Heart right ventricle (tissue), 16 donors: ENCODE measurements at regions of chr2 and their contacts with region 1.

Region 1: GRCh38 chr2:222903234-222904220 is 42.7 kb downstream of the ACSL3 start:
- DNase-seq: peak in 1 of 2 donors; percentile 24
- ATAC-seq: peak in 7 of 8 donors; percentile 64 to 74 (median 68)
- H3K4me3 ChIP-seq: no peak overlapping the region
- H3K27ac ChIP-seq: peak overlapping the region in 1 of 10 donors; percentile 39
- H3K4me1 ChIP-seq: peaks cover 0 to 74% (median 40%) of the 10 kb centered on the region in 9 donors
- H3K27me3 ChIP-seq: no peaks in the 10 kb centered on the region
- CTCF ChIP-seq: peak; percentile 55 to 83 (median 75)

Region 2: GRCh38 chr2:222707689-222708525 is 195.6 kb before region 1 on chr2:
- intact Hi-C with region 1: loop called in 9 of 10 experiments (anchors 1 to 5 kb)
- DNase-seq: peak; percentile 82 to 84
- ATAC-seq: peak; percentile 23 to 84 (median 62)
- H3K4me3 ChIP-seq: no peak overlapping the region
- H3K27ac ChIP-seq: no peak overlapping the region
- H3K4me1 ChIP-seq: peaks cover 0 to 33% (median 22%) of the 10 kb centered on the region in 9 donors
- H3K27me3 ChIP-seq: no peaks in the 10 kb centered on the region
- CTCF ChIP-seq: peak; percentile 93 to 98 (median 96)

Region 3: GRCh38 chr2:222753251-222753824 is 150.2 kb before region 1 on chr2:
- intact Hi-C with region 1: loop called in 1 of 10 experiments (anchors 5 kb)
- DNase-seq: peak; percentile 45 to 72
- ATAC-seq: peak; percentile 85 to 98 (median 94)
- H3K4me3 ChIP-seq: no peak overlapping the region
- H3K27ac ChIP-seq: peak overlapping the region in 7 of 10 donors; percentile 10 to 61 (median 51)
- H3K4me1 ChIP-seq: peaks cover 0 to 31% (median 26%) of the 10 kb centered on the region in 9 donors
- H3K27me3 ChIP-seq: no peaks in the 10 kb centered on the region
- CTCF ChIP-seq: no peak

Region 4: GRCh38 chr2:222805541-222806304 is 97.8 kb before region 1 on chr2:
- intact Hi-C with region 1: loop called in 3 of 10 experiments (anchors 5 to 10 kb)
- DNase-seq: peak in 1 of 2 donors; percentile 18
- ATAC-seq: peak; percentile 63 to 98 (median 90)
- H3K4me3 ChIP-seq: no peak overlapping the region
- H3K27ac ChIP-seq: peak overlapping the region in 6 of 10 donors; percentile 6 to 75 (median 26)
- H3K4me1 ChIP-seq: peaks cover 0 to 24% (median 14%) of the 10 kb centered on the region in 9 donors
- H3K27me3 ChIP-seq: no peaks in the 10 kb centered on the region
- CTCF ChIP-seq: no peak

Region 5: GRCh38 chr2:223459328-223459939 is 555.9 kb after region 1 on chr2:
- intact Hi-C with region 1: no loop called
- DNase-seq: no peak
- ATAC-seq: no peak
- H3K4me3 ChIP-seq: no peak overlapping the region
- H3K27ac ChIP-seq: no peak overlapping the region
- H3K4me1 ChIP-seq: peaks cover 0 to 24% (median 0%) of the 10 kb centered on the region in 9 donors
- H3K27me3 ChIP-seq: no peaks in the 10 kb centered on the region
- CTCF ChIP-seq: peak in 8 of 9 donors; percentile 21 to 59 (median 42)